ENCODE measurements at regions of chr2 and their contacts with region 1.

Region 1: GRCh38 chr2:192162392-192163042 is 32.2 kb downstream of the TMEFF2 start:
- DNase-seq: peak; percentile 69
- H3K4me3 ChIP-seq: no peak overlapping the region
- H3K27ac ChIP-seq: no peak overlapping the region
- H3K4me1 ChIP-seq: peaks cover 6% of the 10 kb centered on the region
- H3K27me3 ChIP-seq: no peaks in the 10 kb centered on the region
- CTCF ChIP-seq: peak; percentile 88 to 97 (median 90)
- POLR2A ChIP-seq: no peak

Region 2: GRCh38 chr2:191811807-191812602 is 350.5 kb before region 1 on chr2:
- intact Hi-C with region 1: loop called (anchors 2 kb)
- DNase-seq: peak; percentile 48
- H3K4me3 ChIP-seq: no peak overlapping the region
- H3K27ac ChIP-seq: no peak overlapping the region
- H3K4me1 ChIP-seq: no peaks in the 10 kb centered on the region
- H3K27me3 ChIP-seq: no peaks in the 10 kb centered on the region
- CTCF ChIP-seq: peak; percentile 50 to 85 (median 70)
- POLR2A ChIP-seq: no peak

Region 3: DNA sequence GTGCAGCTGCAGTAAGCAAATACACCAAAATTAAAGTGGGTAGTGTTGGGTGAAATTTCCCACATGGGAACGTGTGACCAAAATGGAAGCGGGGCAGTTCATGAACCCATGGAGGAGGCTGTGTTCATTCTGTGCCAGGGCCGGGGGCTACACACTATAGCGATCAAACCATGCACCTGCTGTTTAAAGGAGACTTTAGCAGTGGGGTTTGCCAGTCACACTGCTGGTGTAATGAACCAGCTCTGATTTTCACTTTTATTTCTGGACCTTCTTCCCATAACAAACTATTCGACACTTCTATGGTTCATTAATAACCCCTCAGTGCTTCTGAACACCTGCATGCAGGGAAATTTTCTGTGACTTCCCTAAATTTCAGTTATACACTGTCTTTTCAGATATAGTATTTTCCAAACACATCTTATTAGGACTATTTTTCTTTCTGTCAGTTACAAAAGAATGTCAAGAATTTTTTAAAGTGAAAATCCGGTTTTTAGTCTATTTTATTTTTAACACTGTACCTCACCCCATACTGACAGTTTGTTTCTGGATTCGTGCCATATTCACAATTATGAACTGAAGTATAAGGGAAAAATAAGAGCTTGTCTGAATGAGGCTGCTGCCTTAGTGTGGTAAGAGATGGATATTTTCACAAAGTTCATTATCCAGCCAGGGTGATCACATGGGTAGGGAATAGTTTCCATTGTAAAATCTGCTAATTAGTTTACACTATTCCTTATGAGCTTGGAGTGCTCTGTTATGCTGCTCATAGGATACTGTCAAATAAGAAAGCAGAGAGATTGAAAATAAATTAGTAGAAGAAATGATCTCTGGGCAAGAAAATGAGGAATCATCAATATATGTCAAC is 204.3 kb before region 1 on chr2:
- intact Hi-C with region 1: no loop called
- DNase-seq: no peak
- H3K4me3 ChIP-seq: no peak overlapping the region
- H3K27ac ChIP-seq: no peak overlapping the region
- H3K4me1 ChIP-seq: no peaks in the 10 kb centered on the region
- H3K27me3 ChIP-seq: no peaks in the 10 kb centered on the region
- CTCF ChIP-seq: no peak
- POLR2A ChIP-seq: no peak

Measured in prostate gland (tissue), 2 donors.